MCF 10A (cell line): ENCODE measurements at regions of chr17 and their contacts with region 1.

Region 1: DNA sequence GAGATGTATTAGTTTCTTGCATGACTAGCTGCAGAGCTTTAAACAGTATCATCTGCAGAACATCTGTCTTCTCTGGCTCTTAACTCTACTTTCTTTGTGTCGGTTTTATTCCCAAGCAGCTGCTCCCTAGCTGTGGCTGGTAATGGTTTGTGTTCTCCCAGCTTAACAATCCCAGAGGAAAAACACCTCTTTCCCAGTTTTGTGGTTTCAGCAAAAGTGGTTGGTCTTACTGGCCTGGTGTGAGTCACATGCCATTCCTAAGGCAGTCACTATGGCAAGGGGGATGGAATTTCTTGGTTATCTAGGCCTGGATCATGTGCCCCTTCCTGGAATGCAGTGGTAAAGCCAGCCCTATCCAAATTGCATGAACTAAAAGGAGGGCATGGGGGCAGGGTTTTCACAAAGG is 27.5 kb downstream of the OMG start:
- DNase-seq: peak; percentile 89
- H3K4me3 Mint-ChIP-seq: peak overlapping the region; percentile 38
- H3K27ac Mint-ChIP-seq: peak overlapping the region; percentile 52
- H3K4me1 Mint-ChIP-seq: peaks cover 39% of the 10 kb centered on the region
- H3K27me3 Mint-ChIP-seq: no peaks in the 10 kb centered on the region
- CTCF ChIP-seq: no peak

Region 2: DNA sequence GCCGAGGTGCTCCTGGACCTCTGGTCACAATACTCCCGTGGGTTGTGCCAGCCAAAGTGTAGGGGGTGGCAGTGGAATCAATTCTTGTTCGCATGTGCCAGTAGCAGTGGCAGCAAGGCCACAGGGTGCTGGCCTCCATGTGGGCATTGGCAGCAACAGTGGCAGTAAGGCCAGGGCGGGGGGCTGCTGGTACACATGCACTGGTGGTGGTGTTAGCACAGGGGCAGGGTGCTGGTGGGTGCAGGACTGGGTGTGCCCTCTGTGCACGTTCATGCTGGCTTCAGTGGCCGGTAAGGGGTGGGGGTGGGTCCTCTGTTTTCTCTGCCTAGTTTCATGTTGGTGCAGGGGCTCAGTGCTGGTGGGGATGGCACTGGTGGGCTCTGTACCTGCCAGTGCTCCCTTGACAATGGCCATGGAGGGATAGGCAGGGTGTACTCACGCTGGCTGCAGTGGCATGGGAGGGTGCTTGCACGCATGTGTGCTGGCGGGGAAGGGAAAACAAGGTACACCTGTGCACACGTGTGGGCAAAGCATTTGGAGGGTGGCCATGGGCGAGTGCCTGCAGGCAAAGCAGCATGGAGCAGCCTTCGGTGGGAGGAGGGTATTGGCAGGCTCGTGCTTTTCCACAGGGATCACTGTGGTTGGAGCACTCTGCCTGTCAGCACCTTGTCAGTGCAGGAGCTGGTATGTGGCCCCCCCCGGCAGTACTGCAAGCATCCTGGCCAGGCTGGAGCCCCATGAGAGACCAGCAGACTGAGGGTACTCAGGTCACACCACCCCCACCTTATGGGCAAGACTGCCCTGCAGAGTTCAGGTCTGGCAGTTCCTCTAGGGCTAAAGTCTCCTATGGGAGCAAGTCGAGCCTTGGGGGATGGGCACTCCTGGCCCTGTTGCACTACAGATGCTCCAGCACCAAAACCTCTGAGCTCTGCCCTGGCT is 139.0 kb before region 1 on chr17:
- CTCF ChIA-PET with region 1: no interaction called
- POLR2A ChIA-PET with region 1: no interaction called
- intact Hi-C with region 1: no loop called
- DNase-seq: no peak
- H3K4me3 Mint-ChIP-seq: no peak overlapping the region
- H3K27ac Mint-ChIP-seq: peak overlapping the region; percentile 19
- H3K4me1 Mint-ChIP-seq: no peaks in the 10 kb centered on the region
- H3K27me3 Mint-ChIP-seq: no peaks in the 10 kb centered on the region
- CTCF ChIP-seq: no peak

Region 3: DNA sequence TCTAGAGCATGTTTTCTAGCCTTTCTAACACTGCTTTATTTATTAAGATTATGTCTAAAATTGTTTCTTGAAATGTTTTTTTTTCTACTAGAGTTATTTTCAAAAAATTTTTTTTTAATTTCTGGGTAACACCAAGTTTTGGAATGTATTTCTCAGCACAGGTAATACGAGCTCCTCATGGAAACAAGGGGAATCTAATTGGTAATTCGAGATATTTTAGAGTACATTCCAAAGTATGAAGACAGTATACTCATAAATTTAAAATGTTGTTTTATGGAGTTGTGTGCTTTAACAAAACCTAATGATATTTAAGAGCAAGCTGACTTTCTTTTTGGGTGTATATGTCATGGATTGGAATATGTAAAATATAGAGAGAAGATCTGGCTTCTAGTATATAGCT is 14.9 kb before region 1 on chr17:
- CTCF ChIA-PET with region 1: interaction called, 4 read pairs
- POLR2A ChIA-PET with region 1: interaction called, 10 read pairs
- intact Hi-C with region 1: no loop called
- DNase-seq: no peak
- H3K4me3 Mint-ChIP-seq: no peak overlapping the region
- H3K27ac Mint-ChIP-seq: no peak overlapping the region
- H3K4me1 Mint-ChIP-seq: peaks cover 15% of the 10 kb centered on the region
- H3K27me3 Mint-ChIP-seq: no peaks in the 10 kb centered on the region
- CTCF ChIP-seq: no peak

Region 4: DNA sequence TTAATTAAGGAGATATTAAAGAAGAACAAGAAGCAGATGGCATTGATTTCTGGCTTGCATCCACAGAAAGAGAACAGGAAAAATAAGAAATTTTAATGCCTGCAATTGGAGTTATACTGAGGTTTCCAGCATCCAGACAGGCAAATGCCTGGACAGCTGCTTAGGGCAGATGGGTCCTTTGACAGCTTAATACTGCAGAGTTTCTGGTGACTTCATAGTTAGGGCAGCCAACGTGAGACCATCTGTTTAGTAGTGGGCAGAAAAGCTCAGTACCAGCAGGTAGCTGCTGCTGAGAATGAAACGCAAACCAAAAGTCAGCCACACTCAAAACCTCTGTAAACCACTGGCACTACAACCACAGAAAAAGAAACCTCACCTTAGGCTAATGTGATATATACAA is 1327.0 kb after region 1 on chr17:
- CTCF ChIA-PET with region 1: no interaction called
- POLR2A ChIA-PET with region 1: no interaction called
- intact Hi-C with region 1: no loop called
- DNase-seq: no peak
- H3K4me3 Mint-ChIP-seq: no peak overlapping the region
- H3K27ac Mint-ChIP-seq: no peak overlapping the region
- H3K4me1 Mint-ChIP-seq: no peaks in the 10 kb centered on the region
- H3K27me3 Mint-ChIP-seq: no peaks in the 10 kb centered on the region
- CTCF ChIP-seq: no peak